Dorsolateral prefrontal cortex (tissue), 120 donors: ENCODE measurements at regions of chr12 and their contacts with region 1.

Region 1: DNA sequence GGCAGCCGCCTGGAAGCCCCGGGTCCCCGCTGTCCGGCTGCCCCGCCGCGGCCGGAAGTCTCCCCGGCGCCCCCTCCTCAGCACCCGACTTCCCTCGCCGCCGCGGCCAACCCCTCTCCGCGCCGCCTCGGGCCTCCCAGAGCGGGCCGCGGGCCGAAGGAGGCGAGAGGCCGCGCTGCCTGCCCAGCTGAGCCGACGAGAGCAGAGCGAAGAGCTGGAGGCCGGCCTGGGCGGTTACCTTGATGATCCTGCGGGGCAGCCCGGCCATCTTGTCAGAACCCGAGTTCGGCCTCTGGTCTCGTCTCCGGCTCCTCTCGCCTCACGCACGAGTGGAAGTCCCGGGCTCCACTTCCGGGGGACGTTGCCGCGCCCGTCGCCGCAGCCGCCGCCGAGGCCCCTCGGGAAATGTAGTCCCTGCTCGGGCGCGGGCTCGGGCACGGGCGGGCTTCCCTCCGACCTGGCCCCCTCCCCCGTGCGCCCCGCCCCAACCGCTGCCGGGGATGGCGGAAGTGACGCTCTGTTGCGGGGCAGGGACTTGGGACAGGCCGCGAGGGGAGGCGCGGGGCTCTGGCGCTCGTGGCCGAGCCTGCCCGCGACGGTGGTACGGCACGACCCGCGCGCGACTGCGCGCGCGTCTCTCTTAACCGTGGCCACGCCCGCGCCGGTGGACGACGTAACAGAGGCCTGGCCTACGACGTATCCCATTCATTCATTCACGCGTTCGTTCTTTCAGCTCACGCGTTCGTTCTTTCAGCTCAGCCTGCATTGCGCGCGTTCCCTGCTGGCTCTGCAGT is at the start of gene UBE2N:
- DNase-seq: peak; percentile 93 to 99 (median 96)
- H3K4me3 ChIP-seq: peak within 1 kb of the TSS; percentile 68 to 100 (median 94)
- H3K27ac ChIP-seq: peak within 1 kb of the TSS; percentile 64 to 97 (median 89)
- H3K27me3 ChIP-seq: no peaks in the 10 kb centered on the region
- CTCF ChIP-seq: peak in 29 of 56 donors; percentile 5 to 58 (median 22)
- total RNA-seq, gene UBE2N: 71.0 to 192 (median 134) TPM

Region 2: DNA sequence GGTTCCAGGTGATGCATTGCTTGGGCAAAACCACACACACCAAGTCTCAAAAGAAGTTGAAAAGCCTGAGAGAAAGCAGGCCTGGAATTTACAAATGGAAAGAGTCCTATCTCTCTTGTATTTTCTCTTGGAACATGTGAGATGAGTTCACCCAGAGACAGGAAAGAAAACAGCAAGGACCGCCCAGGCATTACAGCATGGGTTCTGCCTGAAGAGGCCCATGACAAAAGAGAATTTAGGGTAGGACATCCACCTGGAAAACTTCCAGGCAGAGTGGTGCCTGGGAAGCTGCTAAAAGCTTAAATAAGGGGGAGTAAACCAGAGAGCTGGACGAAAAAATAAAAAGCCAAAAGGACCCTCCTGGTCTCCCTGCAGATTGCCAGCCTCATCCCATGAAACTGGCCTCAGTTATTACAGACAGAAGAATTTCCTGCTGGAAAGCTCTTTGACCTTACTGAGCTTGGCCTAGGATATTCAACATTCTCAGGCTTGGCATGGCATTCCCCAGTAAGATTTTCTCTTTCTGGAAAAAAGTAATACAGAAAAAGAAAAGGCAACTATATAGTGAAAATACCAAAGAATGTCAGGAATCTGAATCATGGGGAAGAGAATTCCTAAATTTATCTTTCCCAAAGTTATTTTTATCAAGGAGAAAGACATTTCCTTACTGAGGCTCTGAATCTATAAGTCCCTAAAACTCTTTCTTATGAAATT is 185.4 kb before region 1 on chr12:
- intact Hi-C with region 1: no loop called
- DNase-seq: no peak
- H3K4me3 ChIP-seq: no peak overlapping the region
- H3K27ac ChIP-seq: peak overlapping the region in 18 of 59 donors; percentile 5 to 73 (median 36)
- H3K27me3 ChIP-seq: no peaks in the 10 kb centered on the region
- CTCF ChIP-seq: no peak

Region 3: GRCh38 chr12:93467351-93468007 is 25.7 kb after region 1 on chr12 and contains the start of gene MRPL42:
- intact Hi-C with region 1: loop called (anchors 1 kb)
- DNase-seq: peak; percentile 81 to 94 (median 86)
- H3K4me3 ChIP-seq: peak within 1 kb of the TSS; percentile 65 to 96 (median 87)
- H3K27ac ChIP-seq: peak within 1 kb of the TSS; percentile 45 to 96 (median 87)
- H3K27me3 ChIP-seq: no peaks in the 10 kb centered on the region
- CTCF ChIP-seq: peak; percentile 44 to 94 (median 77)
- total RNA-seq, gene MRPL42: 26.4 to 78.8 (median 56.2) TPM

Region 4: GRCh38 chr12:93587611-93588010 is 145.8 kb after region 1 on chr12:
- intact Hi-C with region 1: no loop called
- DNase-seq: no peak
- H3K4me3 ChIP-seq: no peak overlapping the region
- H3K27ac ChIP-seq: no peak overlapping the region
- H3K27me3 ChIP-seq: peaks cover 0 to 32% (median 0%) of the 10 kb centered on the region in 45 donors
- CTCF ChIP-seq: no peak

Region 5: GRCh38 chr12:93790472-93791152 is 348.8 kb after region 1 on chr12:
- intact Hi-C with region 1: no loop called
- DNase-seq: no peak
- H3K4me3 ChIP-seq: no peak overlapping the region
- H3K27ac ChIP-seq: no peak overlapping the region
- H3K27me3 ChIP-seq: no peaks in the 10 kb centered on the region
- CTCF ChIP-seq: no peak